ENCODE measurements at regions of chr11 and their contacts with region 1.

Region 1: GRCh38 chr11:128653801-128654231 is 40.1 kb upstream of the FLI1 start:
- DNase-seq: peak; percentile 14
- ATAC-seq: no peak
- H3K4me3 Mint-ChIP-seq: no peak overlapping the region
- H3K27ac Mint-ChIP-seq: no peak overlapping the region
- H3K4me1 Mint-ChIP-seq: peaks cover 16% of the 10 kb centered on the region
- H3K27me3 Mint-ChIP-seq: peaks cover 10% of the 10 kb centered on the region

Region 2: DNA sequence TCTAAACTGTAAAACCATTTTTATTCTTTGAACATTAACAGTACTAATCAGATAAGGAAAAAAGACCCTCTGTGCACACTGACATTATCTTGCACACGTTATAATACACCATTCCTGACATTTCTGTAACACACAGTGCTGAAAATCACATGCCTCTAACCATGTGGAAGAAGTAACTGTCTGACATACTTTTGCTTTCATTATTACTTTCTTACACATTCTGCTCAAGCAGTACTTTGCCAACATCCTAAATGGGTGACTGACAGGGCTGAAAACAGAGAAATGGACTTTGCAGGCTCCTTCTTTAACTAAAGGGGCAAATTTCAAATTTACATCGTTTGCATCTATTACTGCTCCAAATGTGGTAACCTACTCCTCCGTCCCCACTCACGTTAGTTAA is 311.7 kb after region 1 on chr11:
- CTCF ChIA-PET with region 1: no interaction called
- POLR2A ChIA-PET with region 1: no interaction called
- intact Hi-C with region 1: loop called in 1 of 2 experiments (anchors 10 kb)
- DNase-seq: no peak
- ATAC-seq: peak; percentile 88
- H3K4me3 Mint-ChIP-seq: no peak overlapping the region
- H3K27ac Mint-ChIP-seq: no peak overlapping the region
- H3K4me1 Mint-ChIP-seq: peaks cover 27% of the 10 kb centered on the region
- H3K27me3 Mint-ChIP-seq: no peaks in the 10 kb centered on the region